OCI-LY7 (cell line): ENCODE measurements at regions of chr4 and their contacts with region 1.

Region 1: GRCh38 chr4:145501051-145501660 is 19.5 kb downstream of the SMAD1 start:
- DNase-seq: peak; percentile 96
- H3K4me3 ChIP-seq: peak overlapping the region; percentile 51
- H3K27ac ChIP-seq: peak overlapping the region; percentile 99
- H3K4me1 ChIP-seq: peaks cover 100% of the 10 kb centered on the region
- CTCF ChIP-seq: 0 out of 2 replicates have a peak, but pooled peaks have one; percentile 3

Region 2: DNA sequence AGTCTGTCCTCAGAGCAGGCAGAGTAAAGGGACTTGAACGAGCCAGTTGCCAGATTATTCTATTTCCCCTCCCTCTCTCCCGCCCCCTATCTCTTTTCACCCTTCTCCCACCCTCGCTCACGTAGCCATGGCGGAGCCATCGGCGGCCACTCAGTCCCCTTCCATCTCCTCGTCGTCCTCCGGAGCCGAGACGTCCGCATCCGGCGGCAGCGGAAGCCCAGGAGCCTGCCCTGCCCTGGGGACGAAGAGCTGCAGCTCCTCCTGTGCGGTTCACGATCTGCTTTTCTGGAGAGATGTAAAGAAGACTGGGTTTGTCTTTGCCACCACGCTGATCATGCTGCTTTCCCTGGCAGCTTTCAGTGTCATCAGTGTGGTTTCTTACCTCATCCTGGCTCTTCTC is 125.7 kb before region 1 on chr4:
- CTCF ChIA-PET with region 1: no interaction called
- POLR2A ChIA-PET with region 1: no interaction called
- intact Hi-C with region 1: no loop called
- DNase-seq: no peak
- H3K4me3 ChIP-seq: no peak overlapping the region
- H3K27ac ChIP-seq: no peak overlapping the region
- H3K4me1 ChIP-seq: no peaks in the 10 kb centered on the region
- CTCF ChIP-seq: no peak

Region 3: DNA sequence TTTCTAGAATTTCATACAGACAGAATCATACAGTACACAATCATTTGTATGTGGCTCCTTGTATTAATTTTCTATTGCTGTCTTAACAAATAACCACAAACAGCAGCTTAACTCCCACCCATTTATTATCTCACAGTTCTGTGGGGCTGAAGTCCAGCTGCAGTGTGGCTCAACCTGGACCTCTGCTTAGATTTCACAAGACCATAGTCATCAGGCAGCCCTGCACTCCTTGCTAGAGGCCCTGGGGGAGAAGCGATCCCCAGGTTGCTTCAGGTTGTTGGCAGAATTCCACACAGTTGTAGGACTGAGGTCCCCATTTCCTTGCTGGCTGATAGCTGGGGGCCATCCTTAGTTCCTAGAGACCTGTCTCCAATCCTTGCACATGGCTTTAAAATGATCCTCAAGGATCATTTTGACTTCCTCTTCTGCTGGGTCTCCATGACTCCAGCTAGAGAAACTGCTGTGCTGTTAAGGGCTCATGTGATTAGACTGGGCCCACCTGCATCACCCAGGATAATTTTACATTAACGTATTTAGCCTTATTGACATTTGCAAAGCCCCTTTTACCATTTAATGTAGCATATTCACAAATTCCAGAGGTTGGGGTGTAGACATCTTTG is 80.5 kb before region 1 on chr4:
- CTCF ChIA-PET with region 1: no interaction called
- POLR2A ChIA-PET with region 1: no interaction called
- intact Hi-C with region 1: no loop called
- DNase-seq: no peak
- H3K4me3 ChIP-seq: no peak overlapping the region
- H3K27ac ChIP-seq: no peak overlapping the region
- H3K4me1 ChIP-seq: no peaks in the 10 kb centered on the region
- CTCF ChIP-seq: no peak

Region 4: DNA sequence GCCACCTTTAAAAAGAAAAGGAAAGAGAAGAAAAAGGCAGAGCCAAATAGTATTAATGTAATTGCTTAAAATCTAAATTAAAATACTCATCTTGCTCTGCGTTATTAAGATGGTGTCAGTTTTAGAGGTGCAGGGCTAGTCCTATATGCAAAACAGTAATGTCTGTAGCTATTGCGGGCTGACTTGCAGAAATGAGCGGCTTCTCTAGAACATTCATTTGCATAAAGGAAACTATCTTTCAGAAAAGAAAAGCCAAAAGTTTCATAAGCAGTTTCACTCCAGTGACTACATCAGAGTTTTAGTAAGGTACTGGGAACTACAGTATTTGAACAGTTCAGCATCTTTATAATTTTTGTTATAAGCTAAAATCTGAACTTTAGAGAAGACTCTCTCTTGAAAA is 13.5 kb before region 1 on chr4:
- CTCF ChIA-PET with region 1: interaction called, 4 read pairs
- POLR2A ChIA-PET with region 1: interaction called, 48 read pairs
- intact Hi-C with region 1: loop called (anchors 1 kb)
- DNase-seq: peak; percentile 87
- H3K4me3 ChIP-seq: peak overlapping the region; percentile 88
- H3K27ac ChIP-seq: peak overlapping the region; percentile 63
- H3K4me1 ChIP-seq: peaks cover 90% of the 10 kb centered on the region
- CTCF ChIP-seq: no peak

Region 5: DNA sequence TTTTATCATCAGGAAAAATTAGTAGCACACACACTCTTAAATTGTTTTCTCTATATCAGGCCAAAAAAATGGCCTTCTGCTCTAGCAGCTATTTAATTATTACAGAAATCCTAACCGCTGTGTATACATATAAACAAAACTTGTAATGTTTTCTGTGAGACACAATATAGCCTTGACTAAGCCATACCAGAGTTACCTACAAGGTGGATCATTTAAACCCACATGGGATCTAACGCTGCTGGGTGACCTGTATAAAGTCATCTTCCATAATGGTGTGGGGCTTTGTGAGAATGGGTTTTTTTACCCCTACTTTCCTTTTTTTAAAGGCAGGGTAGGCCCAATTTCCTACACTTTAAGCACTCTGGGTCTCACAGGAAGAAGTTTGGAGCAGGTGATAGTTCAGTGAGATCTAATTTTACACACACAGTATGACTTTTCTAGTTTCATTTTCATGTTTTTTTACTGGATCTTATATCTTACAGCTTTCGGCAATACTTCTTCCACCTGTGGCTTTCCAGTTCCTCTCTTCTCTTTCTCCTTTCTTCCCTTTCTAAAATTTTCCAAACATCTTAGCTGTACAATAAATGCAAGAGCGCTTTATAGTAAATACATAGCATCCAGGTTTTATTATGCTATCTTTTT is 51.1 kb after region 1 on chr4:
- CTCF ChIA-PET with region 1: no interaction called
- POLR2A ChIA-PET with region 1: no interaction called
- intact Hi-C with region 1: loop called (anchors 2 kb)
- DNase-seq: peak; percentile 58
- H3K4me3 ChIP-seq: peak overlapping the region; percentile 45
- H3K27ac ChIP-seq: peak overlapping the region; percentile 71
- H3K4me1 ChIP-seq: peaks cover 36% of the 10 kb centered on the region
- CTCF ChIP-seq: no peak

Region 6: DNA sequence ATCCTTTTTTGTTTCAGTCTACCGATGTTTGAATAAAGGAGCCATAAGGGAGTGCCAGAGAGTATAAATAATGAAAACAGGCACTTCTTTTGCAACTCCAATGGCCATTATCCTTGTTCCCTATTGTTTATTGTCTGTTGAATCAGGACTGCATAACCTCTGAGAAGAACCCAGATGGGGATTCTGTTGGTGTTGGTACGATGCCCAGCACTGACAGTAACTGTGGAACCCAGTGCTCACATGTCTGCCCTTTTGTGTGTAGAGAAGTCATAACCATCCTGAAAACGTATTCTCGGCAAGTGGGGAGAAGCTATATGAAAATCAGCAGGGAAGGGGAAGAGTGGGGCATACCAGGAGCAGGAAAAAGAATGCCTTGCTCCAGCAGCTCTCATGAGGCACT is 1784.6 kb after region 1 on chr4:
- CTCF ChIA-PET with region 1: no interaction called
- POLR2A ChIA-PET with region 1: no interaction called
- intact Hi-C with region 1: no loop called
- DNase-seq: no peak
- H3K4me3 ChIP-seq: no peak overlapping the region
- H3K27ac ChIP-seq: no peak overlapping the region
- H3K4me1 ChIP-seq: no peaks in the 10 kb centered on the region
- CTCF ChIP-seq: no peak